Activated CD8-positive, alpha-beta memory T cell treated with anti-CD3 and anti-CD28 coated beads, Interleukin-2, amount 10 ng/mL, durations not matched to agents 7 days and 5 days (primary cell): ENCODE measurements at regions of chr9 and their contacts with region 1.

Region 1: DNA sequence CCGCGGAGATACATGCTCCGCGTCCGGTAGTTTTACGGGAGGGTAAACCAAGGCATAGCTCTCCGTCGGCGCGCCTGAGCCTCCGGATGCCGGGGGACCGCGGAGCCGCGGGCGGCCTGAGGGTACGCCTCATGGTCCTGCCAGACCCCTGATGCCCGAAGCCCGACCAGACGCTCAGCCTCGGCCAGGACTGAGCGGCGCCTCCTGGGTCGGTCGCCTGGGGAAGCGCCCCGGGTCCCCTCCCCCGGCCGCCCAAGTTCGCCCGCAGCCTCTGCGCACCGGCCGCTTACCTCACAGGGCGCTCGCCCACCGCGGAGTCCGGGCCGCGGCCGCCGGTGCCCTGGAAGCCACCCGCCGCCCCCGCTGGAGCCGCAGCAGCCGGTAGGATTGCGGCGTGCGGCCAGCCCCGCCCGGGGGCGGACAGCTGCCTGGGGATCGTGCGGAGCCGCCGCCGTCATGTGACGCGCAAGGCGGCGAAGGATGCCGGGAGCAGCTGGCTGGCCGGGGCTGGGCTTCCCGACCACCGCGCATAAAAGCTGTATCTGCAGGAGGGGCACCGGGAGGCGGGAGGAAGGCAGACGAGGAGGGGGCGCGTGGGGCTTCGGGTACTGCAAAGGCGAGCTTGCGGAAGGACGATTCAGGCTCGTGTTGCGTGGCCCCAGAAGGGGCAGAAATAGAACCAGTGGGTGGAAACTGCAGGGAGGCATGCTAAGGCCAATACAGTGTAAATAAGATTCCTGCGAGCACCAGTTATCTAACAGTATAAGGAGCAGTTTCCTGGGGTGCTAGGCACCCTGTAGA is at the start of gene FBXO10:
- DNase-seq: peak; percentile 55
- ATAC-seq: peak; percentile 86
- H3K4me3 Mint-ChIP-seq: peak within 1 kb of the TSS; percentile 79
- H3K27ac Mint-ChIP-seq: no peak within 1 kb of the TSS
- H3K4me1 Mint-ChIP-seq: peaks cover 14% of the 10 kb centered on the region
- H3K27me3 Mint-ChIP-seq: peaks cover 7% of the 10 kb centered on the region
- total RNA-seq, gene FBXO10: 1.3 to 2.6 TPM

Region 2: DNA sequence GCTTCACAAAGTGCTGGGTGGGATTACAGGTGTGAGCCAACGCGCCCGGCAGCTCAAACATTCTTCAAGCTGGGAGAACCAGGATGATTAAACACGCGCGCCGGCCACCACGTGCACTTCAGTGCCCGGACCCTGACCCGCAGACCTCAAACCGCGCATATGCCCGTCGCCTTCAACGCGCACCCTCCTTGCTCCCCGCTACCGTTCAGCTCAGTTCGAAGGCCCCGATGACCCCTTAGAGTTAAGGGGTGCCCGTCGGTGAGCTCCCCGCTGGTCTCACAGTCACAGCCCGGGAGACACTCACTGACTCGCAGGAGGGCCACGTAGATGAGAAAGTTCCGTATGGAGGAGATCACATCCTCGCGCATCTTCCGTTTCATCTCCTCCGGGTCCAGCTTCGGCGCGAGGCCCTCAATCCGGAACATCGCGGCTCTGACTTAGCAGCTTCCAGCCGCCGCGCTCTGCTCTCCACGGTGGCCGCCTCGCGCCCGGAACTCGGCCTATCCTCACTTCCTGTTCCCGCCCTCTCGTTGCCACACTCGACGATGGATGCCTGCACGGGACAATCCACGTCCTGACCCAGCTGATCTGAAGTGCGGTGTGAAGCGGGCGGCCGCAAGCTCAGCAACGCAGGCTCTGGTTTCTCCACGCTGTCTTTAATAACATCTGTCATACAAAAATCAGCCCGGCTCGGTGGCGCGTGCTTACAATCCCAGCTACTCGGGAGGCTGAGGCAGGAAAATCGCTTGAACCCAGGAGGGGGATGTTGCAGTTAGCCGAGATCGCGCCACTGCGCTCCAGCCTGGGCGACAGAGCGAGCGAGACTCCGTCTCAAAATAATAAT is 16.2 kb after region 1 on chr9 and contains the start of gene TOMM5:
- CTCF ChIA-PET with region 1: interaction called, 11 read pairs
- DNase-seq: peak; percentile 95
- ATAC-seq: peak; percentile 97
- H3K4me3 Mint-ChIP-seq: peak within 1 kb of the TSS; percentile 93
- H3K27ac Mint-ChIP-seq: peak within 1 kb of the TSS; percentile 93
- H3K4me1 Mint-ChIP-seq: peaks cover 36% of the 10 kb centered on the region
- H3K27me3 Mint-ChIP-seq: peaks cover 24% of the 10 kb centered on the region
- total RNA-seq, gene TOMM5: 91.6 to 113 TPM